Gastrocnemius medialis (tissue), 4 donors: ENCODE measurements at regions of chr16 and their contacts with region 1.

Region 1: DNA sequence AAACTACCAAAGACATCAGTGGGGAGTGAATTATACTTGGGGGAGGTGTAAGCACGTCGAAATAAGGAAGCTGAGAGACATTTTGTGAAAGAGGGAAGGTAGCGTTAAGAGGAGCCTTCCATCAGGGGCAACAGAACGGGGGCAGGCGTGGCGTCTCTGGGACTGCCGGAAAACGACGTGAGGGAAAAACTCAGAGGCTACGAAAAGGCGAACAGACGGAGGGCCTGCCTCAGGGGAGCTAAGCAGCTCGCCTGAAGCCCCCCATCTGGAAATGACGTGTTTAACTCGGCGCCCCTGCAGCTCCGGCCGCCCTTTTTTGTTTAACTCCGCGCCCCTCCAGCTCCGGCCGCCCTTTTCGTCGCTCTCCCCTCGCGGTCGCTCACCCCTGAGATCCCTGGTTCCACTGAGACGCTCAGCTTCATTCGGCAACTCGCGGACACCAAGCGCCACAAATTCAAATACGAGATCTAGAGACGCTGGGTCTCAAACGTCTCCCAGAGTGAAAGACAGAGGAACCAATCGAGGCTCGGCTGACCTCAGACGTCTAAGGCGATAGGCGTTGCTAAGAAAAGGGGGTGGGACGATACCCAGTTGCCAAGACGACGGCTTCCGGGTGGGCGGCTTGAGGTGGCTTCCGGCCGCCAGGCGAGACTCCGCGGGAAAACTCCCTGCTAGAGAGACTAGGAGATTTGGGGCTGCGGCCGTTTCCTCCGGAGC is 383.3 kb downstream of the ZFHX3 start:
- DNase-seq: peak; percentile 94
- ATAC-seq: peak; percentile 100
- H3K4me3 ChIP-seq: peak overlapping the region; percentile 73 to 86 (median 82)
- H3K27ac ChIP-seq: peak overlapping the region in 3 of 4 donors; percentile 34 to 38 (median 37)
- H3K4me1 ChIP-seq: peaks cover 7 to 18% of the 10 kb centered on the region in 2 donors
- H3K27me3 ChIP-seq: no peaks in the 10 kb centered on the region
- CTCF ChIP-seq: peak in 1 of 5 experiments; percentile 7
- POLR2A ChIP-seq: no peak

Region 2: DNA sequence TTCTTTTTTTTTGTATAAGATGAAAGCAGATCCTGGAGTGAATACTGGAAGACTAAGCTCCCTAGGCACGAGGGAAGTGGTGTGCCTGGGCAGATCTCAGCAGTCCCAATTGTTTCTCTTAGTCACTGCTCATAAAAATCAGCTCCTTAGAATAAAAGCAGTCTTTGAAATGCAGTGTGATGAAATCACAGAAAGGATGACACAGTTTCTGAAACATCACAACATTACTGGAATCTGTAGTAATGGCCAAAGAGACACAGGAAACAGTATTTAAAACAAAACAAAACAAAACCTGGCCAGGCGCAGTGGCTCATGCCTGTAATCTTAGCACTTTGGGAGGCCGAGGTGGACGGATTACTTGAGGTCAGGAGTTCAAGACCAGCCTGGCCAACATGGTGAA is 417.9 kb after region 1 on chr16:
- in situ Hi-C with region 1: loop called in 2 of 4 experiments (anchors 25 kb)
- intact Hi-C with region 1: no loop called
- DNase-seq: no peak
- ATAC-seq: peak; percentile 68 to 76
- H3K4me3 ChIP-seq: no peak overlapping the region
- H3K27ac ChIP-seq: peak overlapping the region in 1 of 4 donors; percentile 28
- H3K4me1 ChIP-seq: no peaks in the 10 kb centered on the region
- H3K27me3 ChIP-seq: no peaks in the 10 kb centered on the region
- CTCF ChIP-seq: no peak
- POLR2A ChIP-seq: no peak